A673 (cell line): ENCODE measurements at regions of chr11 and their contacts with region 1.

Region 1: GRCh38 chr11:64077607-64078006 is 41.9 kb downstream of the FLRT1 start:
- DNase-seq: no peak
- H3K4me3 ChIP-seq: no peak overlapping the region
- H3K27ac ChIP-seq: peak overlapping the region; percentile 67
- H3K4me1 ChIP-seq: peaks cover 48% of the 10 kb centered on the region
- H3K27me3 ChIP-seq: no peaks in the 10 kb centered on the region
- CTCF ChIP-seq: no peak

Region 2: DNA sequence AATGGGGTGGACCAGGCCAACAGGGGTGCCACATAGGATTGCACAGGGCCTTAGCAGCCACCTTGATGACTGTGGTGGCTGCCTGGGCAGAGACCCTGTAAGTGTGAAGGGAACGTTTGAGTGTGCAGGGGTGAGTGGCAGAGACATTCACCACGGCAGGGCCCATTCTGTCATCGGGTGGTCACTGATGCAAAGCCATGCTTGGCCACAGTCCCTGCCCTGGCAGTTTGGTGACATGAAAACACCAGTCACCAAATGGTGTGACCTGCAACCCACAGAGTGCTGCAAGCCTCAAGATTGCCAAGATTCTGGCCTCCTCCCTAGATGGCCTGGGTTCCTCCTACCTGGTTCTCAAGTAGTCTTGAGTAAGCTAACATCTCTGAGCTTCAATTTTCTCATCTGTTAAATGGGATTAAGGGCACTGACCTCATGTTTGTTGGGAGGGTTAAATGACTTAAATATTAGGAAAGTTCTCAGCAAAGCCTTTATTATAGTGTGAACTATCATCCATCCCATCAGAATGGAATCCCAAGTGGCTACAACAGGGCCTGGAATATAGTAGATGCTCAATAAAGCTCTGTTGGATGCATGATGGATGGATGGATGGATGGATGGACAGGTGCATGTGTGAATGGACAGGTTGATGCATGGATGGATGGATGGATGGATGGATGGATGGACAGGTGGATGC is 35.3 kb after region 1 on chr11:
- CTCF ChIA-PET with region 1: no interaction called
- POLR2A ChIA-PET with region 1: interaction called, 20 read pairs
- intact Hi-C with region 1: no loop called
- DNase-seq: no peak
- H3K4me3 ChIP-seq: no peak overlapping the region
- H3K27ac ChIP-seq: no peak overlapping the region
- H3K4me1 ChIP-seq: no peaks in the 10 kb centered on the region
- H3K27me3 ChIP-seq: no peaks in the 10 kb centered on the region
- CTCF ChIP-seq: no peak